ENCODE measurements at regions of chr3 and their contacts with region 1.

Region 1: GRCh38 chr3:40317061-40317855 is 7.8 kb downstream of the EIF1B start:
- DNase-seq: peak in 1 of 6 donors; percentile 31
- ATAC-seq: peak; percentile 49 to 84 (median 78)
- H3K4me3 ChIP-seq: no peak overlapping the region
- H3K27ac ChIP-seq: no peak overlapping the region
- H3K4me1 ChIP-seq: peaks cover 0 to 7% (median 0%) of the 10 kb centered on the region in 3 donors
- H3K27me3 ChIP-seq: no peaks in the 10 kb centered on the region
- CTCF ChIP-seq: peak; percentile 59 to 78 (median 64)

Region 2: GRCh38 chr3:40187945-40188344 is 129.3 kb before region 1 on chr3:
- intact Hi-C with region 1: loop called in 2 of 3 experiments (anchors 5 to 10 kb)
- DNase-seq: no peak
- ATAC-seq: no peak
- H3K4me3 ChIP-seq: no peak overlapping the region
- H3K27ac ChIP-seq: no peak overlapping the region
- H3K4me1 ChIP-seq: peaks cover 0 to 2% (median 0%) of the 10 kb centered on the region in 3 donors
- H3K27me3 ChIP-seq: no peaks in the 10 kb centered on the region
- CTCF ChIP-seq: no peak